Endothelial cell of umbilical vein (primary cell): ENCODE measurements at regions of chr12 and their contacts with region 1.

Region 1: DNA sequence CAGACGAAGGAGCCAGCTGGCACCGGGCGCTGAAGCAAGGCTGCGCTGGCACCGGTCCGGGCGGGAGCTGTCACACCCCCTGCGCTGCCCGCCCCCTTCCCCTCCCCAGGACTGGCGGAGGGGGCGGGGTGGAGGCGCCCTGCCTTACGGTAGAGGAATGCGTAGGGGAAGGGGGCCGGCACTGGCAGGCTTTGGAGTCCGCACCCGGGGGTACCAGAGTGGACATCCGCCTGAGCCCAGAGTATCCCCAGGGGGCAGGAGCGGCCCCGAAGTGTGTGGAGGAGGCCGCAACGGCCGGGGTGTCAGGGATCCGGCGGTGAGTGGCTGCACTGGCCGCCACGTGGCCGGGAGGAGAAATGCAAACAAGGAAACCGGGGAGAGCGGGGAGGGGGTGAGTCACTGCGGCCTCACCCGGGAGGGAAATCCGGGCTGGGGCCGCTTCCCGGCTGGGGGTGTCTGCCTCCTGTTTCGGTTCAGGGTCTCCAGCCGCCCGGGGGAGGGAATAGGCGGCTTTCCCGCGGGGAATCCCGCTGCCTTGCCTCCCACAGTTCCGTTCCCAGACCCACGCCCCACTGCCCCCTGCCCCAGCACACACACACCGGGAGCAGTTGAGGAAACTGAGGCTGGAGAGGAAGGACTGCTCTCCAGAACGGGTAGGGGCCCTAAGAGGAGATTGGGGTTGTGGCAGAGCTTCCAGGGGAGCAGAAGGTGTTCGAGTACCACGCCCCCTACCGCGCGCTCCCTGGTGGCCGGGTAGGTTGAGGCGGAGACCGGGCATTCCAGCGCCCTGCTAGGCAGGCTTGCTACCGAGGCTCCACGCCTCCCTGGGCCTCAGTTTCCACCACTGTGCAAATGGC is at the start of gene RAPGEF3:
- DNase-seq: peak; percentile 94
- H3K4me3 ChIP-seq: peak within 1 kb of the TSS; percentile 50 to 71 (median 62)
- H3K27ac ChIP-seq: peak within 1 kb of the TSS; percentile 95
- H3K4me1 ChIP-seq: peaks cover 52% of the 10 kb centered on the region
- H3K27me3 ChIP-seq: no peaks in the 10 kb centered on the region
- CTCF ChIP-seq: peak; percentile 43 to 70
- POLR2A ChIP-seq: peak; percentile 67
- total RNA-seq, gene RAPGEF3: 53.6 and 55.1 TPM in 2 replicates

Region 2: GRCh38 chr12:47517122-47517521 is 241.9 kb before region 1 on chr12:
- CTCF ChIA-PET with region 1: no interaction called
- POLR2A ChIA-PET with region 1: no interaction called
- dilution Hi-C with region 1: no loop called
- intact Hi-C with region 1: no loop called
- DNase-seq: no peak
- H3K4me3 ChIP-seq: no peak overlapping the region
- H3K27ac ChIP-seq: no peak overlapping the region
- H3K4me1 ChIP-seq: no peaks in the 10 kb centered on the region
- H3K27me3 ChIP-seq: no peaks in the 10 kb centered on the region
- CTCF ChIP-seq: no peak
- POLR2A ChIP-seq: no peak

Region 3: DNA sequence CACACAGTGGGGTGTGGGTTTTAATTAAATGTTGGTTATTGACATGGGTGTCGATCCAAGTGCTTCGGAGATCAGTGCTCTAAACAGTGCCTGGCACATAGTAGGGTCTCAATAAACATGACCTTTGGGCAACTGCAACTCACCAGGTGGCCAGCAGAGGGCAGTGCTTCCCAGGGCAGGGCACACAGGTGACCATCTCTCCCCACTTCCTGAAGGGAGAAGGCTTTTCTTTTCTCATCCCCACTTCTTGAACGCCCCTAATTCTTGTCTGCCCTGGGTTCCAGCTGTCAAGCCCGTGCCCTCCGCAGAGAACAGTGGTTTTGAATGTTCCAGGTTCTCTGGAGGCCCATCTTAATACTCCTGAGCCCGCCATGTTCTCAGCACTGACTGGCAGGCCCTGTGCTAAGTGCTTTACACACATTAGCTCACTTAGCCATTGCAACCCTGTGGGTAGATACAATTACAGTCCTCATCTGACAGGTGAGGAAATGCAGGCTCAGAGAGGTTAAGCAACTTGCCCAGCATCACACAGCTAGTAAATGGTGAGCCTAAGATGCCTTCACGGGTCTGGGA is 16.7 kb before region 1 on chr12:
- CTCF ChIA-PET with region 1: interaction called, 191 read pairs
- POLR2A ChIA-PET with region 1: interaction called, 11 read pairs
- dilution Hi-C with region 1: no loop called
- intact Hi-C with region 1: loop called (anchors 1 kb)
- DNase-seq: peak; percentile 51
- H3K4me3 ChIP-seq: no peak overlapping the region
- H3K27ac ChIP-seq: no peak overlapping the region
- H3K4me1 ChIP-seq: peaks cover 11% of the 10 kb centered on the region
- H3K27me3 ChIP-seq: no peaks in the 10 kb centered on the region
- CTCF ChIP-seq: peak; percentile 89 to 94
- POLR2A ChIP-seq: no peak

Region 4: DNA sequence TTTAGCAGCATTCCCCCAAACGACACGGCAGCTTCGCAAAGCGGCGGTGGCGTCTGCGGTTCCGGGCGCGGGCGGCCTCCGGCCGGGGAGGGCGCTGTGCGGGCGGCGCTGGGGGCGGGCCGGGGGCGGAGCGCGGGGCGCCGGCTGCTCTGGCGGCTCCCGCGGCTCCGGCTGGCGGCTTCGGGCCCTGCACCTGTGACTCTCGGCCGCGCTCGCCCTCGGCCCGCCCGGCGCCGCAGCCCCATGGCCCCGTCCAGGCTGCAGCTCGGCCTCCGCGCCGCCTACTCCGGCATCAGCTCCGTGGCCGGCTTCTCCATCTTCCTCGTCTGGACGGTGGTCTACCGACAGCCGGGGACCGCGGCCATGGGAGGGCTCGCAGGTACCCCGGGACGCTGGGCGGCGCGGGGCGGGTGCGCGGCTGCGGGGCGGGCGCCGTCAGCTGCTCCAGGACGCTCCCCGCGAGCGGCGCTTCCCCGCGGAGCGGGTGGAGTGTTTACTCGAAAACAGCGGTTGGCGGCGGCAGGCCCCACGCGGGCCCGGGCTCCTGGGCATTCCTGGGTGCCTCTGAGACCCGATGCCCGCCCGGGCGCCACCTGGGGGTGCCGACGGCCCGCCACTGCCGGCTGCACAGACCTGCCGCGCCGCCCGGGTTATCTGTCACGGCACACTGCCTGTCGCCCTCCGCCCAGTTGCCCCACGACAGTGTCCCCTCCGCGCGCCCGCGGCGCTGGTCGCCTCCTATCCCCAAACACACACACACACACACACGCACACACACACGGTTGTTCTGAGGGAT is 14.2 kb after region 1 on chr12 and contains the start of gene SLC48A1:
- CTCF ChIA-PET with region 1: interaction called, 105 read pairs
- POLR2A ChIA-PET with region 1: interaction called, 3 read pairs
- dilution Hi-C with region 1: no loop called
- intact Hi-C with region 1: loop called (anchors 1 kb)
- DNase-seq: peak; percentile 54
- H3K4me3 ChIP-seq: peak within 1 kb of the TSS; percentile 43 to 70 (median 57)
- H3K27ac ChIP-seq: no peak within 1 kb of the TSS
- H3K4me1 ChIP-seq: peaks cover 34% of the 10 kb centered on the region
- H3K27me3 ChIP-seq: no peaks in the 10 kb centered on the region
- CTCF ChIP-seq: peak; percentile 13 to 38
- POLR2A ChIP-seq: peak; percentile 53
- total RNA-seq, gene SLC48A1: 17.9 and 20.3 TPM in 2 replicates

Region 5: GRCh38 chr12:47812797-47813510 is 53.9 kb after region 1 on chr12:
- CTCF ChIA-PET with region 1: interaction called, 12 read pairs
- POLR2A ChIA-PET with region 1: no interaction called
- dilution Hi-C with region 1: no loop called
- intact Hi-C with region 1: loop called (anchors 2 kb)
- DNase-seq: peak; percentile 87
- H3K4me3 ChIP-seq: peak overlapping the region in 2 of 3 experiments; percentile 11 to 16
- H3K27ac ChIP-seq: peak overlapping the region; percentile 93
- H3K4me1 ChIP-seq: peaks cover 92% of the 10 kb centered on the region
- H3K27me3 ChIP-seq: no peaks in the 10 kb centered on the region
- CTCF ChIP-seq: no peak
- POLR2A ChIP-seq: no peak

Region 6: GRCh38 chr12:47819896-47820630 is 61.0 kb after region 1 on chr12 and contains the start of gene HDAC7:
- CTCF ChIA-PET with region 1: interaction called, 12 read pairs
- POLR2A ChIA-PET with region 1: interaction called, 3 read pairs
- dilution Hi-C with region 1: no loop called
- intact Hi-C with region 1: no loop called
- DNase-seq: peak; percentile 90
- H3K4me3 ChIP-seq: peak within 1 kb of the TSS; percentile 79 to 85 (median 84)
- H3K27ac ChIP-seq: peak within 1 kb of the TSS; percentile 93
- H3K4me1 ChIP-seq: peaks cover 50% of the 10 kb centered on the region
- H3K27me3 ChIP-seq: no peaks in the 10 kb centered on the region
- CTCF ChIP-seq: no peak
- POLR2A ChIP-seq: peak; percentile 88
- total RNA-seq, gene HDAC7: 249 and 252 TPM in 2 replicates

Region 7: DNA sequence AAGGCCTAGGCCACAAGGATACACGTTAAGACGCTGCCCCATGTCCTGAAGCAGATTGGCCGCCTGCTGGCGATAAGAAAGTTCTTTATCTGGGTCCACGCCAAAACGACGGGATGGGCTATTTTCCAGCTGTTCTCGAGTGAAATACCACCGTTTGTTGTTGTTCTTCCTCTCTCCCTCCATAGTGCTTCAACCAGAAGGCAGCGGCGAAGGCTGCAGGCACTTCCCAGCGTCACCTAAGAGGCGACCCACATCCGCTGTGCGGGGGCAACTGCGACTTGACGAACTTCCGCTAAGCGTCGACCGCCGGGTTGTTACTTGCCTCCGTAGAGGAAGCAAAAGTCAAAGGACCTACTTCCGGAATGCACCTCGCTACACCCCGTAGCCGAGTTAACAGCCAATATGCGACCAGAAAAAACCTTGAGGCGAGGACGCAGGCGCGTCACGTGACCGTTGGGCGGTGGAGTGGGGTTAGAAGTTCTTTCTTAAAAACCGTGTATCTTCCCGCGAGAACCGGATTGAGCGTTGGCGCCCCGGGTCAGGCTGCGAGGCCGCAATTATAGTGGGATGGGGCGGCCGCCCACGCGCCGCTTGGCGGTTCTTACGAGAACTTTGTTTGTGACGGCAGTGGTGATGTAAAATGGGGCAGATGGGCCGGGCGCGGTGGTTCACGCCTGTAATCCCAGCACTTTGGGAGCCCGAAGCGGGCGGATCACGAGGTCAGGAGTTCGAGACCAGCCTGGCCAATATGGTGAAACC is 957.6 kb after region 1 on chr12 and contains the start of gene CCNT1:
- CTCF ChIA-PET with region 1: no interaction called
- POLR2A ChIA-PET with region 1: no interaction called
- dilution Hi-C with region 1: no loop called
- intact Hi-C with region 1: loop called (anchors 5 kb)
- DNase-seq: peak; percentile 100
- H3K4me3 ChIP-seq: peak within 1 kb of the TSS; percentile 65 to 92 (median 71)
- H3K27ac ChIP-seq: peak within 1 kb of the TSS; percentile 90
- H3K4me1 ChIP-seq: peaks cover 16% of the 10 kb centered on the region
- H3K27me3 ChIP-seq: no peaks in the 10 kb centered on the region
- CTCF ChIP-seq: peak; percentile 10 to 31
- POLR2A ChIP-seq: peak; percentile 61
- total RNA-seq, gene CCNT1: 33.0 and 35.1 TPM in 2 replicates